RWPE1 (cell line): ENCODE measurements at regions of chr4 and their contacts with region 1.

Region 1: GRCh38 chr4:40325189-40326019 is 9.7 kb upstream of the CHRNA9 start:
- DNase-seq: peak; percentile 69
- H3K27ac ChIP-seq: no peak overlapping the region
- CTCF ChIP-seq: peak; percentile 90

Region 2: GRCh38 chr4:40164459-40164858 is 160.9 kb before region 1 on chr4:
- CTCF ChIA-PET with region 1: no interaction called
- POLR2A ChIA-PET with region 1: no interaction called
- DNase-seq: no peak
- H3K27ac ChIP-seq: no peak overlapping the region
- CTCF ChIP-seq: no peak

Region 3: DNA sequence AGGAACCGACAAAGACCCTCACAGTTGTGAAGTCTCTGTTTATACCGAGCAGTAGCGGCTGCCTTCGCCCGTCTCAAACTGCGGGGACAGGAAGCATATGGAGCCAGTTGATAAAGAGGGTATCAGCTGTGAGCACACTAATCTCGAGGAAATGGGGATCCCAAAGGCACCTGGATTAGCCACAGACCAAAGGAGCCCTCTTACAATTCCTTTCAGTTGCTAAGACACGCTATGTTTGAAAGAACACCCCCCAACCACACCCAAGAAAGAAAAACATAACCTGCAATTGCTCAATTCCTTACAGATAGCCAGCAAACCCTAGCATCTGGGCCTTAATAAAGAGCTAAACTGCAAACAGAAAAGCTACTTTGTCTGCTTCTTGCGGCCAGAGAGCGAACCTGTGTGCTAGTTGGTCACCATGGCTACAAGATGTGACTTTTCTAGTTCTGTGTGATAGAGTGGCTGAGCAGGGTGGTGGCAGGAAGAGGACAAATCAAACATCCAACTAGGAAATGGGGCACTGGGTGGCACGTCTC is 13.5 kb before region 1 on chr4:
- CTCF ChIA-PET with region 1: interaction called, 20 read pairs
- POLR2A ChIA-PET with region 1: no interaction called
- DNase-seq: no peak
- H3K27ac ChIP-seq: peak overlapping the region; percentile 87
- CTCF ChIP-seq: no peak

Region 4: GRCh38 chr4:40418430-40419230 is 93.2 kb after region 1 on chr4:
- CTCF ChIA-PET with region 1: no interaction called
- POLR2A ChIA-PET with region 1: no interaction called
- DNase-seq: no peak
- H3K27ac ChIP-seq: no peak overlapping the region
- CTCF ChIP-seq: no peak

Region 5: GRCh38 chr4:40629401-40630334 is 304.3 kb after region 1 on chr4 and contains the start of gene RBM47:
- CTCF ChIA-PET with region 1: interaction called, 10 read pairs
- POLR2A ChIA-PET with region 1: no interaction called
- DNase-seq: peak; percentile 72
- H3K27ac ChIP-seq: peak within 1 kb of the TSS; percentile 55
- CTCF ChIP-seq: peak; percentile 32